ENCODE measurements at regions of chr9 and their contacts with region 1.

Region 1: GRCh38 chr9:131203431-131204218 is 72.7 kb downstream of the FAM78A start:
- DNase-seq: no peak
- H3K4me3 ChIP-seq: no peak overlapping the region
- H3K27ac ChIP-seq: no peak overlapping the region
- H3K4me1 ChIP-seq: no peaks in the 10 kb centered on the region
- H3K27me3 ChIP-seq: no peaks in the 10 kb centered on the region
- CTCF ChIP-seq: no peak
- EP300 ChIP-seq: no peak
- POLR2A ChIP-seq: no peak

Region 2: GRCh38 chr9:131227112-131227958 is 23.7 kb after region 1 on chr9:
- intact Hi-C with region 1: no loop called
- DNase-seq: peak; percentile 40 to 69 (median 65)
- H3K4me3 ChIP-seq: no peak overlapping the region
- H3K27ac ChIP-seq: no peak overlapping the region
- H3K4me1 ChIP-seq: peaks cover 11% of the 10 kb centered on the region
- H3K27me3 ChIP-seq: no peaks in the 10 kb centered on the region
- CTCF ChIP-seq: no peak
- EP300 ChIP-seq: no peak
- POLR2A ChIP-seq: no peak

Region 3: DNA sequence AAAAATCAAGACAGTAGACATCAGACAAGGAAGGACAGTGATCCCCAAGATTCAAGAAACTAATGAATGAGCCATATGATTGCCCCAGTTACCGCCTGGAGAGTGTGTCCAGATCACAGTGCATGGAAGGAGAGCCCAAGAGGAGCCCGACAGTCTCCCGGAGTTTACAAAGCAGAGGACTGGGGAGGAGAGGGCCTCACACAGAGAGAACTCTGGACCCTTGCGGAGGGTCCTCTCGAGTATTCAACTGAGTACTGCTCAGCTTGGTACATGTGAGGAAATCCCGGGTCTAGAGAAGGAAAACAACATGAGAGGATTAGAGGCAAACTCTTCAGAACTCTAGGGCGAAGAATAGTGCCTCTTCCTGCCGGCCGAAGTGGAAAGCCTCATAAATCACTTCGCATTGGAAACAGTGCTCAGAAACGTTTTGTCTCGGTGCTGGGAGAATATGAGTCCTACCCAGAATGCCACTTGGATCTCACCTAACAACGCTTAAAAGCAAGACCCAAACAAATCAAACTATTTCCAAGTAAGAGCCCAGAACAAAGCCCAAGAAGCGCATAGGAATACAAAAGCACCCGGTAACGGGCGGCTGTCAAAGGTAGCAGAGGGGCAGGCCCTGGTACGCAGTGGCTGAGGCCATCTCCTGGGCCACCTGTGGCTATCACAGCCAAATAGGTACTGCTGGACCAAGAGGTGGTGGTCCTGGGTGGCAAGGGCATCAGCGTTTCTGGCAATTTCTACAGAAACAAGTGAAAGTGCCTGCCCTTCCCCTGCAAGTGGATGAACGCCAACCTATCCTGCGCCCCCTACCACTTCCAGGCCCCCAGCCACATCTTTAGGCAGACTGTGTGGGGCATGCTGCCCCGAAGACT is 36.7 kb after region 1 on chr9:
- intact Hi-C with region 1: loop called in 1 of 4 experiments (anchors 2 kb)
- DNase-seq: peak in 1 of 5 donors; percentile 17
- H3K4me3 ChIP-seq: no peak overlapping the region
- H3K27ac ChIP-seq: no peak overlapping the region
- H3K4me1 ChIP-seq: peaks cover 5% of the 10 kb centered on the region
- H3K27me3 ChIP-seq: no peaks in the 10 kb centered on the region
- CTCF ChIP-seq: no peak
- EP300 ChIP-seq: no peak
- POLR2A ChIP-seq: no peak

Region 4: GRCh38 chr9:131289301-131290038 is 85.8 kb after region 1 on chr9 and contains the start of gene PLPP7:
- intact Hi-C with region 1: no loop called
- DNase-seq: peak; percentile 69 to 77 (median 73)
- H3K4me3 ChIP-seq: peak within 1 kb of the TSS; percentile 42
- H3K27ac ChIP-seq: peak within 1 kb of the TSS; percentile 60 to 67
- H3K4me1 ChIP-seq: peaks cover 11% of the 10 kb centered on the region
- H3K27me3 ChIP-seq: no peaks in the 10 kb centered on the region
- CTCF ChIP-seq: no peak
- EP300 ChIP-seq: no peak
- POLR2A ChIP-seq: no peak
- total RNA-seq, gene PLPP7: 7.6 to 12.0 (median 11.0) TPM